Heart left ventricle (tissue), 16 donors: ENCODE measurements at regions of chr2 and their contacts with region 1.

Region 1: DNA sequence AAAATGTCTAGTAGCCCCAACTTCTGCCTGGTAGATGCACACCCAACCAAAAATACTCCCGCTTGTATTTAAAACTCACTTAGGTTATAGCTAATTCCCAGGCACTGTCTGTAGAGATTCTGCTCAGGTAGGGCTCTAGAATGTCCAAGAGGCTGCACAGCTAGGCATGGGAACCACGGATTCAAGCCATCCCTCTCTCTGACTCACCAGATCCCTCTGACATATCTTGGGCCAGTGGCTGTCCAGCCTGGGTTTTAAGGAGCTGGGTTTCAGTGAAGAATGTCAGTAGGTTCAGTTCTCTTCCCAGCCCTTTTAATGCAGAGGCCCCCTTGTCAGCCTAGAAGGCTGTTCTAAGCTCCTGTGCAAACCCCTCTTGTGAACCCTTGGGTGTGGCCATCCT is 15.9 kb upstream of the IL1R1 start:
- DNase-seq: no peak
- ATAC-seq: no peak
- H3K4me3 ChIP-seq: no peak overlapping the region
- H3K27ac ChIP-seq: no peak overlapping the region
- H3K4me1 ChIP-seq: peaks cover 0 to 22% (median 0%) of the 10 kb centered on the region in 12 donors
- H3K27me3 ChIP-seq: no peaks in the 10 kb centered on the region
- CTCF ChIP-seq: no peak
- POLR2A ChIP-seq: no peak

Region 2: GRCh38 chr2:102082571-102083392 is 43.9 kb before region 1 on chr2:
- intact Hi-C with region 1: loop called in 1 of 10 experiments (anchors 5 kb)
- DNase-seq: peak in 3 of 5 donors; percentile 41 to 45 (median 45)
- ATAC-seq: peak; percentile 87 to 93 (median 91)
- H3K4me3 ChIP-seq: peak overlapping the region in 4 of 12 donors; percentile 15 to 25 (median 18)
- H3K27ac ChIP-seq: peak overlapping the region in 10 of 12 donors; percentile 22 to 80 (median 60)
- H3K4me1 ChIP-seq: peaks cover 0 to 26% (median 7%) of the 10 kb centered on the region in 12 donors
- H3K27me3 ChIP-seq: no peaks in the 10 kb centered on the region
- CTCF ChIP-seq: no peak
- POLR2A ChIP-seq: no peak

Region 3: GRCh38 chr2:102667072-102667471 is 540.4 kb after region 1 on chr2:
- intact Hi-C with region 1: no loop called
- DNase-seq: no peak
- ATAC-seq: peak in 2 of 4 donors; percentile 41 to 47
- H3K4me3 ChIP-seq: no peak overlapping the region
- H3K27ac ChIP-seq: no peak overlapping the region
- H3K4me1 ChIP-seq: no peaks in the 10 kb centered on the region
- H3K27me3 ChIP-seq: no peaks in the 10 kb centered on the region
- CTCF ChIP-seq: no peak
- POLR2A ChIP-seq: no peak